Activated CD8-positive, alpha-beta T cell treated with anti-CD3 and anti-CD28 coated beads for 36 hours (primary cell): ENCODE measurements at regions of chr1 and their contacts with region 1.

Region 1: GRCh38 chr1:226634166-226634588 is 85.6 kb downstream of the STUM start:
- DNase-seq: peak; percentile 93
- ATAC-seq: peak; percentile 77
- H3K4me3 Mint-ChIP-seq: no peak overlapping the region
- H3K27ac Mint-ChIP-seq: peak overlapping the region; percentile 92
- H3K4me1 Mint-ChIP-seq: peaks cover 56% of the 10 kb centered on the region
- H3K27me3 Mint-ChIP-seq: no peaks in the 10 kb centered on the region
- CTCF ChIP-seq: peak; percentile 98

Region 2: DNA sequence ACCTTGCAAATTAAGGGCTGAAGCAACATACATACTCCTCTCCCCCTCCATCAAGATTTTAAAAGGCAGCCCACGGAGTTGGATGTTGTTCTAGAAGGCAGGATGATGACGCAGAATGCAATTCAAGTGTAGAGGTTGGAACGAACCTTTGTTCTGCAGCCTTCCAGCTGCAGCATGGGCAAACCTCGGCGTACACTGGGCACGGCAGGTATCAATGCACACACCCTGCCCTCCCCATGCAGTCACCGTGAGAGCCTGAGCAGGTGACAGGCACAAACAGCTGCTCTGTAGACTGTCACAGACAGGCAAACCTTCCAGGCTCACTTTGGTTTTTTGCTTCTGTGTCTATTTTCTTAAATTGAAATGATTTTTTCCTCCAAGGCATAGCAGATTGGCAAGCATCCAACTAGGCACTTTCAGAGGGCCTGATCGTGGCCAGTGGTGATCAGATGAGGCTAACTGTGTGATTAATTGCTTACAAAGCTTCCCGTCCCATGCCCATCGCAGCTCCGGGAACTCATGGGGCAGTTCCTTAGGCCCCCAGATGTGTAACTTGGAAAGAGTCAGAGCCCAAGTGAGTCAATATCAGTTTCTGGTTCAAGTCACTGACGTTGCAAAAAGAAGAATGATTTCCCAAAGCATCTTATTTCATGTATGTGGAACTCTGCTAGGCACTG is 22.6 kb after region 1 on chr1:
- CTCF ChIA-PET with region 1: interaction called, 22 read pairs
- POLR2A ChIA-PET with region 1: interaction called, 14 read pairs
- intact Hi-C with region 1: no loop called
- DNase-seq: peak; percentile 42
- ATAC-seq: peak; percentile 6
- H3K4me3 Mint-ChIP-seq: peak overlapping the region; percentile 24
- H3K27ac Mint-ChIP-seq: no peak overlapping the region
- H3K4me1 Mint-ChIP-seq: peaks cover 65% of the 10 kb centered on the region
- H3K27me3 Mint-ChIP-seq: no peaks in the 10 kb centered on the region
- CTCF ChIP-seq: no peak

Region 3: DNA sequence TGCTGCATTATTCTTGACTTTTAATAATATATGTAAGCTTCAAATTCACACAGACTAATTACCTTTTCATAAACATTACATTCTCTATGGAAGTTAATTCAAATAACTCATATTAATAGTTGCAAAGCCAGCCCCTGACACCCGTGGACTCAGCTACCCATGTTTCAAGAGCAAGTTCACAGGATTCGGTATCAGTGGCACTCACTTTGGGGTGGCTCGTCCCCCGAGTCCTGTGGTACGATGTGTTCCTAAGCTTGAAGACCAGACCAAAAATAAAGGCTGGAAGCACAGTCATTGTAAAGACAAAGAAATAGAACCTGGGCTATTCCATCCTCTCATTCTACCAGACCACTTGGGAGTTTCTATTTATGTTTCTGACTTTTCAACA is 34.0 kb after region 1 on chr1:
- CTCF ChIA-PET with region 1: interaction called, 22 read pairs
- POLR2A ChIA-PET with region 1: interaction called, 14 read pairs
- intact Hi-C with region 1: no loop called
- DNase-seq: no peak
- ATAC-seq: no peak
- H3K4me3 Mint-ChIP-seq: no peak overlapping the region
- H3K27ac Mint-ChIP-seq: peak overlapping the region; percentile 57
- H3K4me1 Mint-ChIP-seq: peaks cover 92% of the 10 kb centered on the region
- H3K27me3 Mint-ChIP-seq: no peaks in the 10 kb centered on the region
- CTCF ChIP-seq: no peak

Region 4: GRCh38 chr1:226687426-226687825 is 53.2 kb after region 1 on chr1:
- CTCF ChIA-PET with region 1: interaction called, 133 read pairs
- POLR2A ChIA-PET with region 1: interaction called, 19 read pairs
- intact Hi-C with region 1: no loop called
- DNase-seq: peak; percentile 79
- ATAC-seq: peak; percentile 31
- H3K4me3 Mint-ChIP-seq: peak overlapping the region; percentile 15
- H3K27ac Mint-ChIP-seq: peak overlapping the region; percentile 99
- H3K4me1 Mint-ChIP-seq: peaks cover 100% of the 10 kb centered on the region
- H3K27me3 Mint-ChIP-seq: no peaks in the 10 kb centered on the region
- CTCF ChIP-seq: peak; percentile 61

Region 5: DNA sequence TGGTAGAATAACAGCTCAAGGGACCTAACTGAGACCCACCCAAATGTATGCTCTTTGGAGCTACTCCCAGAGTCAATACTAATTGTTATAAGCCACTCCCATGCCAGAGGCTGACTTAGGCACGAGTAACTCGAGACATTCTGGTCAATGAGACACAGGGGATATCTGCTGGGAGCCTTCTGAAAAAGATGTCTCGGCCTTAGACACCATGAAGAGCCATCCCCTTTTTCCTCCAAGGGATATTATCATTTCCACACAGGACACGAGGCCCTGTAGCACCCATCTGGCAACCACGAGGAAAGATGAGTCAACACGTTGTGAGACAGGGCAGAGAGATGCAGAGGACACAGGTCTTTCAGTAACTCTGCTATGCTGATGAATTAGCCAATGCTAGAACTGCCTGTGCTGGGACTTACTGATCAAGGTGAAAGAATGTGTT is 74.2 kb after region 1 on chr1:
- CTCF ChIA-PET with region 1: interaction called, 18 read pairs
- POLR2A ChIA-PET with region 1: interaction called, 9 read pairs
- intact Hi-C with region 1: no loop called
- DNase-seq: peak; percentile 63
- ATAC-seq: peak; percentile 69
- H3K4me3 Mint-ChIP-seq: peak overlapping the region; percentile 61
- H3K27ac Mint-ChIP-seq: peak overlapping the region; percentile 99
- H3K4me1 Mint-ChIP-seq: peaks cover 88% of the 10 kb centered on the region
- H3K27me3 Mint-ChIP-seq: no peaks in the 10 kb centered on the region
- CTCF ChIP-seq: no peak

Region 6: DNA sequence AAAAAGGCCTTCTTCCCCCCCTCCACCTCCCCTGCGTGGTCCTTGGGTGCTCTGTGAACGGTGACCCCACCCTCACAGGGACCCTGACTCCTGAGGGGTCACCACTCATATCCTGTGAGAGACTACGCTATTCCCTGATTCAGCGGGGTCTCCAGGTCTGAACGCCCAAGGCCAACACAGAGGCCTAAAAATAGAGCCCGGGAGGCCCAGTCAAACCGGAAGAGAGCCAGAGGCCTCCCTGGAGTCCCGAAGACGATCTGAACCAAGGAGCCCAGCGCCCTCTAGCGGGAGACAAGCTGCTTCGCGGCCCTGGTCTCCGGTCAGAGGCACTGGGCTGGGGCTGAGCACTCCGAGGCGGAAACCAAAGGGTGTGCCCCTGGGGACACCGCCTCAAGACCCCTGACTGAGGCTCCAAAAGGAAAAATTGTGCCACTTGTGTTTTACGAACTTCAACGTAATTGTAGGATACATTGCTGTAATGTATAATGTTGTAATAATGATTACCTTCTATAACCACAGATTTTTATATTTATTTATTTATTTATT is 193.9 kb after region 1 on chr1:
- CTCF ChIA-PET with region 1: interaction called, 73 read pairs
- POLR2A ChIA-PET with region 1: interaction called, 5 read pairs
- intact Hi-C with region 1: loop called (anchors 5 kb)
- DNase-seq: peak; percentile 97
- ATAC-seq: peak; percentile 99
- H3K4me3 Mint-ChIP-seq: peak overlapping the region; percentile 53
- H3K27ac Mint-ChIP-seq: peak overlapping the region; percentile 93
- H3K4me1 Mint-ChIP-seq: peaks cover 36% of the 10 kb centered on the region
- H3K27me3 Mint-ChIP-seq: no peaks in the 10 kb centered on the region
- CTCF ChIP-seq: peak; percentile 89